ENCODE measurements at regions of chr3 and their contacts with region 1.

Region 1: DNA sequence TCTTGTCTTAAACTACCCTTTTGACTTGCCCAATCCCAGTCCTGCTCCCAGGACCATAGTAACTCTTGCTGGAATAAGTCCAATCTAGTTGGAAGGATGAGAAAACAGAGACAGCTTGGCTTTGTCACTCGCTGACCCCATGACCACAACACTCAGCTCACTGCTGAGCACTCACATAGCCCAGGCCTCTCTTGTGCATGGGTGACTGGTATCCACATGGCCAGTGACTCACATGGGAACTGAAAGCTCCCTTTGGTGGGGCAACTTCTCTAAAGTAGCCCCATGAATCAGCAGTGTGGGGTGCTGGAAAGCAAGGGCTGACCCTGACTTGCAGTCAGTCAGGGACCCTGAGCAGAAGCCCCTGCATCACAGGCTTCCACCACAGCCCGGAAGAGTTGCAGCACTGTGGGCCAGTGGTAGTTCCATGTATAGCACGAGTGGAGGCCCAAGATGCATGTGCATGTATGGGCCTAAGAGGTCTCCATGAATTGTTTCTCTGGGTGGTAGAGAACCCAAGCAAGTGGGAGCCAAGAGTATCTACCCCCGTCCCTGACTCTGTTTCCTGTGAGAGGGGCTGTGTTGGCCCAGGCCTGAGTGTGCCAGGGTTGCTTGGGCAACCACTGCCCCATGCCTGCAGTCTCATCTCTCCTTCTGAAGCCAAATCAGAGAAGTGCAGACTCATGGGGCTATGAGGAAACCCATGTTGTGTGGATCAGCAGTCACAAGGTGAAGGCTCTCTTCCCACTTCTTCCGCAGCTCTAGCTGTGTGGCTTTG is 62.1 kb upstream of the XCR1 start:
- H3K4me3 Mint-ChIP-seq: peak overlapping the region; percentile 55
- H3K27ac Mint-ChIP-seq: peak overlapping the region; percentile 100
- H3K4me1 Mint-ChIP-seq: peaks cover 92% of the 10 kb centered on the region
- H3K27me3 Mint-ChIP-seq: no peaks in the 10 kb centered on the region

Region 2: GRCh38 chr3:46130631-46131288 is 41.3 kb after region 1 on chr3:
- intact Hi-C with region 1: loop called (anchors 1 kb)
- H3K4me3 Mint-ChIP-seq: peak overlapping the region; percentile 75
- H3K27ac Mint-ChIP-seq: no peak overlapping the region
- H3K4me1 Mint-ChIP-seq: peaks cover 3% of the 10 kb centered on the region
- H3K27me3 Mint-ChIP-seq: no peaks in the 10 kb centered on the region

Region 3: GRCh38 chr3:46368569-46368968 is 279.1 kb after region 1 on chr3:
- intact Hi-C with region 1: loop called (anchors 2 kb)
- H3K4me3 Mint-ChIP-seq: peak overlapping the region; percentile 32
- H3K27ac Mint-ChIP-seq: peak overlapping the region; percentile 85
- H3K4me1 Mint-ChIP-seq: peaks cover 69% of the 10 kb centered on the region
- H3K27me3 Mint-ChIP-seq: no peaks in the 10 kb centered on the region

Region 4: DNA sequence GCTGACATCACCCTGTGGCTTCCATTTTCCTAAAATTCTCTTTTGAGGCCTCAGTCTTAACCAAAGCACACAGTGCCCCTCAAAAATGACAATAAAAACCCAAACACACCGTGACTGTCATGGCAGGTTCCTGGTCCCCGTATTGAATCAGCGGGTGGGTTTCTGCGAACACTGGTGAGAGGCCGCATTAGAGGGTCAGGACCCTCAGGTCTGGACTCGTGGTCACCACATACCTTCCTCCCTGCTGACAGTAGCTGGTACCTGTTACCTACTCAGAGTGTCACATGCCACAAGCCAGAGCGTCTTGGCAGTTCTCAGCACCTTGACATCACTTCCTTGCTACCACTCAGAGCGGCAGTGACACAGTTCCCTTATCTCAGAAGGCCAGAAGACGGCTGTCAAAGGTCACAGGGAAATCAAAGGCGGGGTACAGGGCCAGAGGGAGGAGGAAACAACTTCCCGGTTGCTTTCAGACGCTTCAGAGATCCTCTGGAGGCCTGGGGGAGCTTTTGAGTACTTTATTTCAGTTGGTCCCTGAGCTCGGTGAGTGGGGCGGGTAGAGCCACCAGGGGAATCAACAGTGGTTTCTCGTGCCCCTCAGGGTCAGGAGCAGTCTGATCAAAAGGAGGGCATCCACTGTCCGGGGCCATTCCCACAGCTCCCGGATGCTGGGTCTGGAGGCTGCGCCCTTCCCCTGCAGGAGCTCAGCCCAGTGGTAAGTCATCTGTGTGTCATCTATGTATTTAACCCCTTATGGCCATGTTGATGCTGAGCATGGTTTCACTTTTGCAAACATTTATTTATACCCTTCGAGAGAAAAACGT is 317.6 kb after region 1 on chr3 and contains the starts of genes CCR5AS and CCRL2:
- intact Hi-C with region 1: loop called (anchors 2 kb)
- H3K4me3 Mint-ChIP-seq: peak within 1 kb of the TSS; percentile 84
- H3K27ac Mint-ChIP-seq: peak within 1 kb of the TSS; percentile 95
- H3K4me1 Mint-ChIP-seq: peaks cover 74% of the 10 kb centered on the region
- H3K27me3 Mint-ChIP-seq: no peaks in the 10 kb centered on the region

Measured in dendritic cell treated with granulocyte-macrophage colony-stimulating factor and Interleukin-4, amounts not matched to agents 40 ng/mL and 50 ng/mL, for 4 days (primary cell).